Heart right ventricle (tissue), 16 donors: ENCODE measurements at regions of chr19 and their contacts with region 1.

Region 1: GRCh38 chr19:49877020-49877878 is at the starts of genes AKT1S1 and TBC1D17:
- DNase-seq: peak; percentile 99 to 100
- ATAC-seq: peak; percentile 78 to 92 (median 87)
- H3K4me3 ChIP-seq: peak within 1 kb of the TSS; percentile 61 to 95 (median 81)
- H3K27ac ChIP-seq: peak within 1 kb of the TSS; percentile 91 to 99 (median 98)
- H3K4me1 ChIP-seq: peaks cover 9 to 36% (median 26%) of the 10 kb centered on the region in 9 donors
- H3K27me3 ChIP-seq: no peaks in the 10 kb centered on the region
- CTCF ChIP-seq: no peak
- total RNA-seq, gene AKT1S1: 26.0 to 51.9 (median 32.4) TPM
- total RNA-seq, gene TBC1D17: 40.6 to 57.9 (median 50.6) TPM

Region 2: DNA sequence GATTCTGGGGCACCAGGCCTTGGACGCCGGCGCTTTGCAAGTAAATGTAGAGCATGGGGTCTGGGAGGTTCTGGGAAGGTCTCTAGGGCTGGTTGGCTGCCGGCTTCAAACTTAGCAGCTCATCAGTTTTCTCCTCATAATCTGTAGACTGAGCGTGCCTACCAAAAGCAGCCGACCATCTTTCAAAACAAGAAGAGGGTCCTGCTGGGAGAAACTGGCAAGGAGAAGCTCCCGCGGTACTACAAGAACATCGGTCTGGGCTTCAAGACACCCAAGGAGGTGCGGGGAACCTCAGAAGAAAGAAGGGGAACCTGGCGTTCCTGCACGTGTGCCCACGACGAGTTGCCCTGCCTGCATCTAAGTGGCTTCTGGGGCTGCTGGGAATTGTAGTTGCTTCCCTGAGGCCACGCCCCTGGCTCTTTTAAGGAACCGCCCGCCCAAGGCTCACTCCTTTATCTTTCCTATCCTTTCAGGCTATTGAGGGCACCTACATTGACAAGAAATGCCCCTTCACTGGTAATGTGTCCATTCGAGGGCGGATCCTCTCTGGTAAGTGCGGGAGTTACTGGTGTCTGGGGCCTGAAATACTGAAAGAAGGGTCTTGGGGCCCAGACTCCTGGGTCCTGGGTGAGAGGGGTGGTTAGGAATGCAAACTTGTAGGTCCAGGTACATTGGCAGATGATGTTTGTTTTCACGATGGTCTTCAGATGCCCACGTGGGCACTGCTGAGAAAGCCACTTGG is 380.0 kb before region 1 on chr19:
- intact Hi-C with region 1: loop called in 1 of 10 experiments (anchors 5 kb)
- DNase-seq: peak; percentile 32 to 56
- ATAC-seq: no peak
- H3K4me3 ChIP-seq: peak overlapping the region; percentile 63 to 97 (median 82)
- H3K27ac ChIP-seq: peak overlapping the region; percentile 87 to 99 (median 92)
- H3K4me1 ChIP-seq: peaks cover 11 to 61% (median 49%) of the 10 kb centered on the region in 9 donors
- H3K27me3 ChIP-seq: no peaks in the 10 kb centered on the region
- CTCF ChIP-seq: no peak

Region 3: GRCh38 chr19:49766007-49766937 is 111.0 kb before region 1 on chr19:
- intact Hi-C with region 1: loop called in 2 of 10 experiments (anchors 5 kb)
- DNase-seq: peak; percentile 98 to 100
- ATAC-seq: peak; percentile 90 to 96 (median 94)
- H3K4me3 ChIP-seq: peak overlapping the region; percentile 4 to 96 (median 82)
- H3K27ac ChIP-seq: peak overlapping the region; percentile 81 to 97 (median 92)
- H3K4me1 ChIP-seq: peaks cover 4 to 49% (median 33%) of the 10 kb centered on the region in 9 donors
- H3K27me3 ChIP-seq: no peaks in the 10 kb centered on the region
- CTCF ChIP-seq: no peak

Region 4: DNA sequence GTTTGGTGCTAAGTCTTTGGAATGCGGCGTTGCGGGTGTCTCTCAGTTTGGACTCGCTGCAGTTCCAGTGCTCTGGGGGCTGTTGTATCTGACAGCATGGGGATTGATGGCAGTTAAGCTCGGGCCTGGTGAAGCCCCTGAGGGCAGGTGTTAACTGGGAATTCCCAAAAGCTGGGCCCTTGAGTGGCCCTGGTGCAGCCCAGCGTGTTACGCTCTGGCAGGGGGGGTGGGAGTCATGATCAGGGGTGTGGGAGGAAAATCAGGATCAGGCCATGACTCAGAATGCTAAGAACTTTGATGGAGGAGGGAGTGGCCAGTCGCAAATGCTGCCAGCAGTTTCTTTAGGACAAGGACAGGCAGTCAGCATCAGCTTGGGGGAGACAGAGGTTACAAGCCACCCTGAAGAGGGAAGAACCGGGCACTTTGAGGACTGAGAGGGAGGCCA is 90.9 kb before region 1 on chr19:
- intact Hi-C with region 1: no loop called
- DNase-seq: no peak
- ATAC-seq: peak in 3 of 8 donors; percentile 19 to 38 (median 37)
- H3K4me3 ChIP-seq: no peak overlapping the region
- H3K27ac ChIP-seq: no peak overlapping the region
- H3K4me1 ChIP-seq: peaks cover 0 to 19% (median 9%) of the 10 kb centered on the region in 9 donors
- H3K27me3 ChIP-seq: no peaks in the 10 kb centered on the region
- CTCF ChIP-seq: no peak

Region 5: GRCh38 chr19:49817964-49818648 is 59.1 kb before region 1 on chr19 and contains the start of gene MED25:
- intact Hi-C with region 1: loop called in 2 of 10 experiments (anchors 1 kb)
- DNase-seq: peak; percentile 85 to 87
- ATAC-seq: peak; percentile 75 to 83 (median 78)
- H3K4me3 ChIP-seq: peak within 1 kb of the TSS; percentile 49 to 93 (median 86)
- H3K27ac ChIP-seq: peak within 1 kb of the TSS; percentile 83 to 98 (median 96)
- H3K4me1 ChIP-seq: peaks cover 5 to 44% (median 38%) of the 10 kb centered on the region in 9 donors
- H3K27me3 ChIP-seq: no peaks in the 10 kb centered on the region
- CTCF ChIP-seq: peak in 6 of 9 donors; percentile 27 to 59 (median 36)
- total RNA-seq, gene MED25: 39.7 to 110 (median 54.9) TPM

Region 6: DNA sequence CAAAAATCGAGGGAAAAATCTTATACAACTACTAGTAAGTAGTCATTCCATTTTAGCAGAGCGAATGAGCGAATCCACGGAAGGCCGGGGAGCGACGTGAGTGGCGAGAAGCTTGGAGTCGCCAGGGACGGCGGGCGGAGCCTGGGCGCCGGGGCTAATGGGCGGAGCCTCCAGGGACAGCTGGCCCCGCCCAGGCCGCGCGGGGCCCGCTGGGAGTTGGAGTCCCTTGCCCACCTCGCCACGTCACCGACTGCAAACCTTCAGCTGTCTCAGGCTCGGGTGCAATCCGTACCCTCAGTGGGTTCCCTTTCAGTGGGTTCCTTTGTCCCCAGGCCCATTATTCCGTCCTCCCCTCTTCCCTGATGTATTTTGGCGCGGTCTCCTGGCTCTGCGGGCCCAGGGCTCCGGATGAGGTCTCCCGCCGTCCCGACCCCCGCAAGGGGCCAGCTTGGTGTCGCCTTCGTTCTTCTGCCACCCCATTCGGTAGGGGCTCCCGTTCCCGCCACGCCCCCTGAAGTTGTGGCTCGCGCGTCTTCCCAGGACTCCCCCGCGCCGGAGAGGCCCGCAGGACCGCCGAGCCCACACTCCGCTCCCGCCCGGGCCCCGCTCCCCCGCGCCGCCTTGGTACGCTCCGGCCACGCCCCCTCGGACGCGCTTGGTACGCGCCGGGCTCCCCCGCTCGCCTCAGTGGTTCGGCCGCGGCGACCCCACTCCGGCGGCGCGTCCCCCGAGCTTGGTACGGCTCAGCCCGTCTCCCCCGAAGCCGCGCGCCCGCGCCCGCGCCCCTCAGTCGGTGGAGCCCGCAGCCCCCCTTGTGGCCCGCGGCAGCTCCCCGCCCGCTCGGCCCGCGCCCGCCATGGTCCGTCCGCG is 26.5 kb before region 1 on chr19 and contains the start of gene PTOV1:
- intact Hi-C with region 1: loop called in 1 of 10 experiments (anchors 2 kb)
- DNase-seq: peak; percentile 92 to 93
- ATAC-seq: peak; percentile 94 to 98 (median 96)
- H3K4me3 ChIP-seq: peak within 1 kb of the TSS; percentile 71 to 100 (median 86)
- H3K27ac ChIP-seq: peak within 1 kb of the TSS; percentile 96 to 100 (median 99)
- H3K4me1 ChIP-seq: peaks cover 9 to 49% (median 29%) of the 10 kb centered on the region in 9 donors
- H3K27me3 ChIP-seq: no peaks in the 10 kb centered on the region
- CTCF ChIP-seq: no peak
- total RNA-seq, gene PTOV1: 67.8 to 137 (median 90.0) TPM

Region 7: GRCh38 chr19:49929611-49930482 is 52.6 kb after region 1 on chr19:
- intact Hi-C with region 1: loop called in 3 of 10 experiments (anchors 2 to 5 kb)
- DNase-seq: peak; percentile 90 to 96
- ATAC-seq: peak; percentile 92 to 96 (median 93)
- H3K4me3 ChIP-seq: peak overlapping the region; percentile 66 to 98 (median 94)
- H3K27ac ChIP-seq: peak overlapping the region; percentile 71 to 98 (median 95)
- H3K4me1 ChIP-seq: peaks cover 4 to 53% (median 24%) of the 10 kb centered on the region in 9 donors
- H3K27me3 ChIP-seq: no peaks in the 10 kb centered on the region
- CTCF ChIP-seq: no peak

Region 8: DNA sequence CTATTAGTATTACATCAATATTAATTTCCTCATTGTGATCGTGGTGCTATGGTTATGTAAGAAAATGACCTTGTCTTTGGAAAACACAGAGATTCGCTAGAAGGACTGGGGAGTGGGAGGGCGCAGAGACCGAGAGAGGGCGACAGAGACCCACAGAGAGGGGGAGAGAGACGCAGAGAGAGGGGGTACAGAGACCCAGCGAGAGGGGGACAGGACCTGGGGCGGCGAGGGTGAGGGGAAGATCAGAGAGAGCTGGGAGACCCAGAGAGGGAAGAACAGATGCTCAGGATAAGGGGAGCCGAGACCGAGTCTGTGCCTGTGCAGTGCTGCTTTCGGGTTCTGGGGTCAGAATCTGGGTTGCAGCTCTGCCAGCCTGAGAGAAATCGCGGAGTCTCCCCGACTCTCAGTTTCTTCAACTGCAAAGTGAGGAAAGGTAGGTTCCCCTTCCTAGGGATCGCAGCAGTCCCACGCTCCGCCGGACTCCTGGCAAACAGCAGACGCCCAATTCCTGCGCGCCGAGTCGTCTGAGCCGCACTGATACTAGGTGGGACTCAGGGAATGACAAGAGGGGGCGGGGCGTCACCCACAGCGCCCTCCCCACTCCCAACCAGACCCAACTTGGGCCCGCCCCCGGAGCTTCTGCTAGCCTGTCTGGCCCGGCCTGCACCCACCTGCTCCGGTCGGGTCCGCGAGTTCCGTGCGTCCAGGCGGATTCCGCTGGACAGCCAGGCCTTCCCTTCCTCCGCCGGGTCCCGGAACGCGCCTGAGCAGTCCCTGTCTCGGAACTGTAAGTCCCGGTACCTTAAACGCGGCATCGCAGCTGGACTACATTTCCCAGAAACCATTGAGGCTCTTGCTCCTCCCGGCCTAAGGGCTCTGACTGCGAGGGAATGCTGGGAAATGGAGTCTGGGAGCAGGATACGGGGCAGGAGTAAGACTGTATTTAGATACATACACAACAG is 270.5 kb after region 1 on chr19:
- intact Hi-C with region 1: no loop called
- DNase-seq: peak; percentile 89 to 91
- ATAC-seq: peak; percentile 97 to 99 (median 98)
- H3K4me3 ChIP-seq: peak overlapping the region; percentile 32 to 86 (median 70)
- H3K27ac ChIP-seq: peak overlapping the region; percentile 23 to 92 (median 78)
- H3K4me1 ChIP-seq: peaks cover 0 to 10% (median 3%) of the 10 kb centered on the region in 9 donors
- H3K27me3 ChIP-seq: peaks cover 0 to 20% (median 0%) of the 10 kb centered on the region in 7 donors
- CTCF ChIP-seq: peak; percentile 12 to 65 (median 50)